GM12878 (cell line): ENCODE measurements at regions of chr2 and their contacts with region 1.

Region 1: DNA sequence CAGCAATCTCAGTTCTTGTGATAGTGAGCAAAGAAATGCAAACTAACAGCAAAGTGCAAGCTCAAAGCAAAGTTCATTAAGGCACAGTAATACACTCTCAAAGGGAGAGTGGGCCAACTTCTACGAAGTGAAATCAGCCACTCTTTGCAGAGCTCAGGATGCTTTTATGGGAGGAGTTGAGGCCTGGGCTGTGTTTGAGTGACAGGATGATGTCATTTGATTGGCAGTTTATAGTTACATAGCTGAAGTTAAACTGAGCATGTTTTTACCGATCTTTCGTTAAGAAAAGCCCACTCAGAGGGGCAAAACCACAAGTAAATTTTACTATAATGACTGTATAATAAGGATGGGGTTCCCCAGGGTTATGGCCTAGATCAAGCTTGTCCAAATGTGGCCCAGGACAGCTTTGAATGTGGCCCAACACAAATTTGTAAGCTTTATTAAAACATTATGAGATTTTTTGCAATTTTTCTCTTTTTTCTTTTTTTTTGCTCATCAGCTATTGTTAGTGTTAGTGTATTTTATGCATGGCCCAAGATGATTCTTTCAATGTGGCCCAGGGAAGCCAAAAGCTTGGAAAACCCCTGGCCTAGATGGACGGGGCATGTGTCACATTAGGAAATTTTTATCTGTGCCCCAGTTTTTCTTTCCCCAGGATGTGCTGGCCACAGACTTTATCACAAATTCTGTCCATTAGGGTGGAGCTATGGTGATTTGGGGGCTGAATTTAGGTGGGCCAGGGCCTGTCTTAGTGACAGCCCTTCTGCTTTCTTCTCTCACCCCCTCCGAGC is 8.3 kb upstream of the DNAH7 start:
- DNase-seq: no peak
- ATAC-seq: peak; percentile 68
- H3K4me3 ChIP-seq: no peak overlapping the region
- H3K27ac ChIP-seq: no peak overlapping the region; the same call in 1 of the 2 replicates
- H3K4me1 ChIP-seq: peaks cover 14% of the 10 kb centered on the region
- H3K27me3 ChIP-seq: no peaks in the 10 kb centered on the region
- CTCF ChIP-seq: no peak
- EP300 ChIP-seq: no peak
- POLR2A ChIP-seq: no peak
- RAD21 ChIP-seq: no peak

Region 2: GRCh38 chr2:195782156-195782555 is 294.8 kb before region 1 on chr2:
- CTCF ChIA-PET with region 1: no interaction called
- POLR2A ChIA-PET with region 1: no interaction called
- RAD21 ChIA-PET with region 1: no interaction called
- SMC1A ChIA-PET with region 1: no interaction called
- in situ Hi-C with region 1: no loop called
- intact Hi-C with region 1: no loop called
- DNase-seq: no peak
- ATAC-seq: no peak
- H3K4me3 ChIP-seq: no peak overlapping the region
- H3K27ac ChIP-seq: no peak overlapping the region
- H3K4me1 ChIP-seq: no peaks in the 10 kb centered on the region
- H3K27me3 ChIP-seq: no peaks in the 10 kb centered on the region
- CTCF ChIP-seq: no peak
- EP300 ChIP-seq: no peak
- POLR2A ChIP-seq: no peak
- RAD21 ChIP-seq: no peak

Region 3: DNA sequence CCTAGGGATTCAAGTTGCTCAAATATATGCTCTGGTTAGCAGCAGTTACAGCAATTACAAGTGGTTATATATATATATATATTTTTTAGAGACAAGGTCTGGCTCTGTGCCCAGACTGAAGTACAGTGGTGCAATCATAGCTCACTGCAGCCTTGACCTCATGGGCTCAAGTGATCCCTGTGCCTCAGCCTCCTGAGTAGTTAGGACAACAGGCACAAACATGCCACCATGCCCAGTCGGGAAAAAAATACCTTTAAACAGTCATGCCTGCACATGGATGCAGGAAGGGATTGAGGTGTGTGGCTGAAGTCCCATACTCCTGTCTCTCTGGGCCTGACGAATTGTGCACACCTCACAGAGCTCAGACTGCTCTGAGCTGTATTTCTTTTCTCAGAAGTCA is 11.2 kb after region 1 on chr2:
- CTCF ChIA-PET with region 1: interaction called, 25 read pairs
- POLR2A ChIA-PET with region 1: interaction called, 3 read pairs
- RAD21 ChIA-PET with region 1: interaction called, 13 read pairs
- SMC1A ChIA-PET with region 1: interaction called, 13 read pairs
- in situ Hi-C with region 1: no loop called
- intact Hi-C with region 1: no loop called
- DNase-seq: no peak
- ATAC-seq: no peak
- H3K4me3 ChIP-seq: no peak overlapping the region
- H3K27ac ChIP-seq: no peak overlapping the region
- H3K4me1 ChIP-seq: peaks cover 4% of the 10 kb centered on the region; the same call in 1 of the 2 replicates
- H3K27me3 ChIP-seq: no peaks in the 10 kb centered on the region
- CTCF ChIP-seq: no peak
- EP300 ChIP-seq: no peak
- POLR2A ChIP-seq: no peak
- RAD21 ChIP-seq: no peak

Region 4: GRCh38 chr2:196131384-196131937 is 54.5 kb after region 1 on chr2:
- CTCF ChIA-PET with region 1: interaction called, 5 read pairs
- POLR2A ChIA-PET with region 1: no interaction called
- RAD21 ChIA-PET with region 1: interaction called, 9 read pairs
- SMC1A ChIA-PET with region 1: interaction called, 26 read pairs
- in situ Hi-C with region 1: no loop called
- intact Hi-C with region 1: loop called (anchors 5 kb)
- DNase-seq: peak; percentile 47
- ATAC-seq: peak; percentile 74
- H3K4me3 ChIP-seq: no peak overlapping the region
- H3K27ac ChIP-seq: no peak overlapping the region
- H3K4me1 ChIP-seq: no peaks in the 10 kb centered on the region
- H3K27me3 ChIP-seq: no peaks in the 10 kb centered on the region
- CTCF ChIP-seq: peak; percentile 39 to 53 (median 49); a peak in 5 of 6 replicates
- EP300 ChIP-seq: no peak
- POLR2A ChIP-seq: no peak
- RAD21 ChIP-seq: peak; percentile 62

Region 5: DNA sequence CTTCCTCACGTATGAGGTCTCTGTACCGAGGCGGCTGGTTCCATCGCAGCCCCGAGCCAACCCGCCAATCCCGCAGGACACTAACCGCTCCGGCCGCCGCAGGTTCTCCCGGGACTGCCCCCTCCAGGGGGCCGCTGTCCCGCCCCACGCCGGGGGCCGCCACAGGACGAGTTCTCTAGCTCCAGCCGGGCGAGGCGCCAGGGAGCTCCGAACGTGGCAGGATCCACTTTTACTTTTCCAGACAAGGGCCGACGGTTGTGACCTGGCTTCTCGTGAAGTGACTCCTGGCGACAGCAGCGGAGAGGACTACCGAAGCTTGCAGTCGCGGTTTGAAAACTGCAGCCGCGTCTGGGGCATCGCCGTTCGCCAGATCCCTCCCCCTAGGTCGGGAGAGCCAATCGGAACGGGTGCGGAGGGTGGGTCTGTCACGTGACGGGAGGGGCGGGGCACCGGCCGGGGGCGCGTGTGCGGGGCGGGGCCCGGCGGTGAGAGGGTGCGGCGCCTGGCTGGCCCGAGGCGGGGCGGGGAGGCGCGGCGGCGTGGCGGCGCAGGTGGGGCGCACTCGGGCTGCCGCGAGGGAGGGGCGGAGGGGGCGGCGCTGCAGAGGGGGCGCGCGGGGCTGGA is 94.4 kb after region 1 on chr2 and contains the start of gene STK17B:
- CTCF ChIA-PET with region 1: interaction called, 62 read pairs
- POLR2A ChIA-PET with region 1: interaction called, 26 read pairs
- RAD21 ChIA-PET with region 1: interaction called, 36 read pairs
- SMC1A ChIA-PET with region 1: interaction called, 124 read pairs
- in situ Hi-C with region 1: no loop called
- intact Hi-C with region 1: loop called (anchors 2 kb)
- DNase-seq: peak; percentile 82
- ATAC-seq: peak; percentile 64
- H3K4me3 ChIP-seq: peak within 1 kb of the TSS; percentile 98
- H3K27ac ChIP-seq: peak within 1 kb of the TSS; percentile 87
- H3K4me1 ChIP-seq: peaks cover 15% of the 10 kb centered on the region
- H3K27me3 ChIP-seq: no peaks in the 10 kb centered on the region
- CTCF ChIP-seq: no peak
- EP300 ChIP-seq: 0 out of 4 replicates have a peak, but pooled peaks of 1 of the 2 experiments have one; percentile 34
- POLR2A ChIP-seq: peak; percentile 99
- RAD21 ChIP-seq: peak; percentile 16; the same call in 1 of the 2 replicates
- polyA plus RNA-seq, gene STK17B: 21.2 to 28.2 TPM

Region 6: GRCh38 chr2:196233021-196233804 is 156.2 kb after region 1 on chr2:
- CTCF ChIA-PET with region 1: interaction called, 15 read pairs
- POLR2A ChIA-PET with region 1: no interaction called
- RAD21 ChIA-PET with region 1: interaction called, 39 read pairs
- SMC1A ChIA-PET with region 1: interaction called, 32 read pairs
- in situ Hi-C with region 1: no loop called
- intact Hi-C with region 1: no loop called
- DNase-seq: no peak
- ATAC-seq: peak; percentile 26
- H3K4me3 ChIP-seq: no peak overlapping the region
- H3K27ac ChIP-seq: peak overlapping the region; percentile 50; the same call in 1 of the 2 replicates
- H3K4me1 ChIP-seq: peaks cover 14% of the 10 kb centered on the region
- H3K27me3 ChIP-seq: no peaks in the 10 kb centered on the region
- CTCF ChIP-seq: no peak
- EP300 ChIP-seq: no peak
- POLR2A ChIP-seq: no peak
- RAD21 ChIP-seq: no peak

Region 7: GRCh38 chr2:196263181-196263747 is 186.3 kb after region 1 on chr2:
- CTCF ChIA-PET with region 1: interaction called, 59 read pairs
- POLR2A ChIA-PET with region 1: no interaction called
- RAD21 ChIA-PET with region 1: interaction called, 15 read pairs
- SMC1A ChIA-PET with region 1: interaction called, 48 read pairs
- in situ Hi-C with region 1: no loop called
- intact Hi-C with region 1: no loop called
- DNase-seq: peak; percentile 88
- ATAC-seq: peak; percentile 94
- H3K4me3 ChIP-seq: 0 out of 2 replicates have a peak overlapping the region, but pooled peaks have one; percentile 7
- H3K27ac ChIP-seq: peak overlapping the region; percentile 75
- H3K4me1 ChIP-seq: peaks cover 9% of the 10 kb centered on the region
- H3K27me3 ChIP-seq: no peaks in the 10 kb centered on the region
- CTCF ChIP-seq: no peak
- EP300 ChIP-seq: peak; percentile 20 to 52; a peak in 2 of 4 replicates
- POLR2A ChIP-seq: 0 out of 2 replicates have a peak, but pooled peaks have one; percentile 31
- RAD21 ChIP-seq: no peak

Region 8: DNA sequence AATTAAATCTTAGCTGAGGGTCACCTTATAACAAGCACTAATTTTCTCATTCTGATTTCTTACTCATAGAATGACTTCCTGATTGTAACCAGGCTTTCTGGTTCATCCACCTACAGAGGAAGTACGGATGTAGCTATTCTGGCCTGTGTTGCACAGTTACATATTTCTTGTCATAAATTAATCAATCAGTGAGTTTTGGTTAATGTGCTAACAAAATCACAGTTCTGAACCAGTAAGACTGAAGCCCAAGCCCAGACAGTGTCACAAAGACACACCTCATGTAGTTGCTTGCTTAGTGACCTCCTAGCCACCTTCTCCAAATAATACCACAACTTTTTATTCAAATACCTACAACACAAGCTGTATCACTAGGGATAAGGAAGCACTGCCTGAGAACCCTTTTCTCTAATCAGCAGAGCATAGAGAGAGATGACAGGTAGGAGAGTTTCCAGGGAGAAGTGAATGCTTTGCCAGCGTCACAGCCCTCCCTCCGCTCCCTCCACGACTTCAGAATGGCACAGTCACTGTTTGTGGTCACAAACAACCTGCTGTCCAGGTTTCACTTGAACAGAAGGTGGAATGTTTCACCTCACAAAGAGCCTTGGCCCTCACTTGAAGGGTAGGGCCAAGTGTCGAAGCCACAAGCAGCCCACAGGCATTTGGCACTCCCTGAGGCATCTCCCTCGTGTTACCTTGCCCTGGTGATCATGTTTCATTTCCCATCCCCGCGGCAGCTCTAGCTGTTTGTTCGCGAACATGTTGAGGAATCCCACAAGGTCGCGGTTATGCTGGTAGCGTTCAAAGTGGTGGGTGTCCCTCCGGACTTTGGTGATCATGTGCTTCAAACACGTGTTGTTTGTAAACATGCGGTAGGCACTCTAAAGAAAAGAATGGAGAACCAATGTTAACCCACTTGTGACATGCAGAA is 215.2 kb after region 1 on chr2:
- CTCF ChIA-PET with region 1: interaction called, 21 read pairs
- POLR2A ChIA-PET with region 1: interaction called, 5 read pairs
- RAD21 ChIA-PET with region 1: interaction called, 31 read pairs
- SMC1A ChIA-PET with region 1: interaction called, 25 read pairs
- in situ Hi-C with region 1: no loop called
- intact Hi-C with region 1: no loop called
- DNase-seq: no peak
- ATAC-seq: peak; percentile 10
- H3K4me3 ChIP-seq: no peak overlapping the region
- H3K27ac ChIP-seq: peak overlapping the region; percentile 51; the same call in 1 of the 2 replicates
- H3K4me1 ChIP-seq: peaks cover 32% of the 10 kb centered on the region
- H3K27me3 ChIP-seq: no peaks in the 10 kb centered on the region
- CTCF ChIP-seq: no peak
- EP300 ChIP-seq: no peak
- POLR2A ChIP-seq: no peak
- RAD21 ChIP-seq: no peak